HEK293T (cell line): ENCODE measurements at regions of chr15 and their contacts with region 1.

Region 1: GRCh38 chr15:48861813-48862431 is 16.0 kb upstream of the EID1 start:
- DNase-seq: peak; percentile 45

Region 2: GRCh38 chr15:48842501-48842900 is 19.4 kb before region 1 on chr15:
- CTCF ChIA-PET with region 1: no interaction called
- POLR2A ChIA-PET with region 1: no interaction called
- DNase-seq: no peak

Region 3: DNA sequence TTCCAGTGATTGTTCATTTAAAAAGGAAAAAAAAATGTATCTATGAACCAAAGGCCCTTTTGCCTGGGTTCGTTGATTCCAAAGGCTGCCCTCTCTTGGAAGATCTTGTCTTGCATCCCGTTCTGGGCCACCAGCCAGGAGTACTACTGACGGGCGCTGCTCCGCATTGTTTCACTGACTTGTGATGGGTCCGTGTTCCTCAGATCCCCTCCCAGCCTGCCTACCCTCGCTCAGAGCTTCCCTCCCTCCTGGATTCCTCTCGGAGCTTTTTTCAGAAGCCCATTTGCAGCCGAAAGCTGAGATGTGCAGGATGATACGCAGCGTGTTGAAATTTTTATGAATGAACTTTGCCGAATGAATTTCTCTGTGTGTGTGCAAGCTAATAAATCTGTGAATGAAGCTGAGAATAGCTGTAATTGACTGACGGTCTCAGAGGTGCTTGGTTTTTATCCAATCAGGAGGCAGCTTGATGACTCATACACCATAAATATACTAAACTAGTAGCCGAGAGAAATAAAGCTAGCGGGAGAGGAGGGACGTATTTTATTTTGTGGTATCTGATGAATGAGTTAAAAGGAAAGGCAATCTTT is 101.7 kb after region 1 on chr15 and contains the start of gene SHC4:
- CTCF ChIA-PET with region 1: interaction called, 12 read pairs
- POLR2A ChIA-PET with region 1: no interaction called
- DNase-seq: peak; percentile 58

Region 4: DNA sequence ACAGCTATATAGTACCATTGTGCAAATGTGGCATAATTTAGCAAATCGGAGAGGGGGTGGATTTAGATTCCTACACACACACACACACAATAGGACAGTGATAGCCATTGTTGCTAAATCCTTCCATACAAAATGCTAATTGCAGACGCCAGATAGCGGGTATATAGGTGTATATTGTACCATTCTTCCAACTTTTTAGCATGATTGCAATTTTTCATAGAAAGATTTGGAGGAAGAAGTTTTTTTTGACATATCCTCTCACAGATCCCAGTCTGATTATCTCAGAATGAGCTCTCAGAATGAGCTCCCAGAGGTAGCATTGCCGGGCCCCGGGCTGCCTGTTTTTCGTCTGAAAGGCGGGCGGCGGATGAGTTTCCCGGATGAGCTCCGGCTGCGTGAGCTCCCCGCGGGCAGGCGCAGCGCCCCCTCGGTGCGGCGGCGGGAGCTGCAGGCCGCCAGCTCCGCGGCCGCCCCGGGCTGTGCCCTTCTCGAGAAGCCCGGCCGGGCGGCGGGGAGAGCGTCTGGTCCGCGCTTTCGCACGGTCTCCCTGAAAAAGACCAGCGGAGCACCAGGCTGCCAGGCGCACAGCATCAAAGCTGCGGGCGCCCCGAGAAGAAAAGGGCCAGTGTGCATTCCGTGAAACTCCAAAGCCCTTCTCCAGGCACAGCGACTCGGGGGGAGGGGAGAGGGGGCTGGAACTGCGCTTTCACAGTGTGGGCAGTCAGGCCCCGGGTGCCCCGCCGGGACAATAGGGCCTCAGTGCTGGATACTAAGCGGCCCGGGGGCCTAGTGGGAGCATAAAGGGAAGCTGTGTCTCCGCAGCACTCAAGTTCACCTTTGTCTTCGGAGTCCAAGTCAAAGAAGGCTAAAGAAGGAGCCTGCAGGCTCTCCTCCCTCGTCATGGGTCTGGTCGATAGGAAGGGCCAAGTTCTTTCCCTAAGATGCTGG is 113.8 kb after region 1 on chr15:
- CTCF ChIA-PET with region 1: interaction called, 10 read pairs
- POLR2A ChIA-PET with region 1: interaction called, 8 read pairs
- DNase-seq: peak; percentile 73